ENCODE measurements at regions of chr6 and their contacts with region 1.

Region 1: GRCh38 chr6:27608916-27609883 is 136.3 kb upstream of the ZNF184 start:
- DNase-seq: peak; percentile 91
- ATAC-seq: no peak
- H3K4me3 ChIP-seq: no peak overlapping the region
- H3K27ac ChIP-seq: no peak overlapping the region
- H3K4me1 ChIP-seq: no peaks in the 10 kb centered on the region
- H3K27me3 ChIP-seq: no peaks in the 10 kb centered on the region
- CTCF ChIP-seq: peak; percentile 96

Region 2: DNA sequence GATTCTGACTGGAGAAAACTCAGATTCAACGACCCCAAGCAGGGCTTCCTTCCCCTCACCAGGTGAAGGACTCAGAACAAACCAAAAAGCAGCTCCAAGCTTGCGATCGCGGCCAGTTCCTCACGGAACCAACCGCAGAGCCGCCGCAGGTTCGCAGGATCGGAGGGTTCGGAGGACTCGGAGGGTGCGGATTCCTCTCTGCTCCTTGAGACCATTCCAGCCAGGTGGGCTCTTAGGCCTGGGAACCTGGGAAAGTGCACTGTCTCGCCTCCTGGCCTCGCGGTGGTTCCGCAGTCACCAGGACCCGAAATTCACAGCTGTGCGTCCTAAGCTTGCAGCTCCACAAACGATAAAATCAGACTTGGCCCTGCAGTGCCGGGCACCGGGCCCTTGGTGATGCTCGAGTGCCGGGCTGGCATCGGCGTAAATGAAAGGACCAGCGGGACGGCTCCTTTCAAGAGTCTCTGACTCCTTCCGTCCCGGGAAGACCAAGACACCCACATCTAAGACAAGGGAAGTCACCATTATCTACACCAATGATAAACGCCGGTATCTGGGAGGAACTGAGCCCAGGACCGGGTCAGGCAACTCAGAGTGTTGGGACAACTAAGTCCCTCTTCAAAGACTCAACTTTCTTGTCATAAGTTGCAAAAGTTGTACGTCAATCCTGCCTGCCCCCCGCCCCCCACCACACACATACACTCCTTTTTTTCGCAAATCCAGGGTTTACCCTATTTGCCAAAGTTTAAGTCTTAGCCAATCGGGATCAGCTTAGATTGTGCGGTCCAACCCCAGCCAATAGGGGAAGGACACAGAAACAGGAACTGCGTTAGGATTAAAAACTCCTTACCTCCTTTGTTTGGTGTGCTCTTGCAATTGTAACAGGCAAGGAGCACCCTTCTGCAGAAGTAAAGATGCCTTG is 431.5 kb before region 1 on chr6:
- CTCF ChIA-PET with region 1: interaction called, 14 read pairs
- POLR2A ChIA-PET with region 1: no interaction called
- in situ Hi-C with region 1: no loop called
- intact Hi-C with region 1: loop called (anchors 10 kb)
- DNase-seq: peak; percentile 78
- ATAC-seq: peak; percentile 89
- H3K4me3 ChIP-seq: peak overlapping the region; percentile 92 to 100
- H3K27ac ChIP-seq: peak overlapping the region; percentile 87
- H3K4me1 ChIP-seq: no peaks in the 10 kb centered on the region
- H3K27me3 ChIP-seq: no peaks in the 10 kb centered on the region
- CTCF ChIP-seq: peak; percentile 81

Region 3: GRCh38 chr6:27303613-27304272 is 305.5 kb before region 1 on chr6:
- CTCF ChIA-PET with region 1: no interaction called
- POLR2A ChIA-PET with region 1: no interaction called
- in situ Hi-C with region 1: no loop called
- intact Hi-C with region 1: loop called (anchors 10 kb)
- DNase-seq: no peak
- ATAC-seq: peak; percentile 95
- H3K4me3 ChIP-seq: peak overlapping the region; percentile 7 to 14
- H3K27ac ChIP-seq: no peak overlapping the region
- H3K4me1 ChIP-seq: no peaks in the 10 kb centered on the region; the same call in 1 of the 2 replicates
- H3K27me3 ChIP-seq: no peaks in the 10 kb centered on the region; the same call in 1 of the 2 replicates
- CTCF ChIP-seq: no peak

Region 4: DNA sequence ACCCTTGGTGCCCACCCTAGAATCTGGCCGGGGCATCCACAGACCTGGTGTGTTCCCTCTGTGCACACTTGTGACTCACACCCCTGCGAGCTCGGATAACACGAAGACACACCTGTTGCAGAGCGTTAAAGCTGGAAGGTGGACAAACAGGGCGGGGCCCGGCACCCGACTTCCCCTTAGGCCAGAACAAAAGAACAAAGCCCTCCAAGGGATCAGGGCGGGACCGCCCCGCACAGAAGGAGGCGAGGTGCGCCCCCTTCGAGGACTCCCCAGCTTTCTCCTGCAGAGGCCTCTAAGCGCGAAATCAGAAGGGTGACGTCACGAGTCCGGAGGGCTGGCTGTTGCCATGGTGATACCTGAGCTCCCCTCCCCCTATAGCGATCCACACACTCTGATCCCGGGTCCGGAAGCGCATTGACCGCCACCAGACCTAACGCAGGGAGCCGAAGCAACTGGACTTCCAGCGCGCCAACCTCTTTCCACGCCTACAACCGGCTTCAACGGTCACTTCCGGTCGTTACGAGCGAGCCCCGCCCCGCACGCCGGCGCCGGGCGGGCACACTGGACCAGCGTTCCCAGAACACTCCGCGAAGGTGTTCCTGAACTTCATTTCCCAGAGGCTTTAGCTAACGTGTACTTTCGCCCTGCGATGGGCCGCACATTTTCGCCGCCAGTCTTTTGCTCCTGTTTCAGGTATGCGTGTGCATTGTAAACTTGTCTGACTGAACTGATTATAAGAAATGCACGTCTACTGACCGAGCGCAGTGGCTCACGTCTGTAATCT is 136.4 kb before region 1 on chr6 and contains the start of gene ZNF184:
- CTCF ChIA-PET with region 1: no interaction called
- POLR2A ChIA-PET with region 1: interaction called, 12 read pairs
- in situ Hi-C with region 1: no loop called
- intact Hi-C with region 1: no loop called
- DNase-seq: peak; percentile 95
- ATAC-seq: peak; percentile 98
- H3K4me3 ChIP-seq: peak within 1 kb of the TSS; percentile 91 to 92
- H3K27ac ChIP-seq: peak within 1 kb of the TSS; percentile 93
- H3K4me1 ChIP-seq: peaks cover 7% of the 10 kb centered on the region
- H3K27me3 ChIP-seq: no peaks in the 10 kb centered on the region
- CTCF ChIP-seq: no peak; the same call in 1 of the 2 replicates
- total RNA-seq, gene ZNF184: 7.8 TPM

Region 5: GRCh38 chr6:27518881-27519795 is 90.1 kb before region 1 on chr6:
- CTCF ChIA-PET with region 1: interaction called, 5 read pairs
- POLR2A ChIA-PET with region 1: no interaction called
- in situ Hi-C with region 1: no loop called
- intact Hi-C with region 1: loop called (anchors 5 kb)
- DNase-seq: peak; percentile 96
- ATAC-seq: peak; percentile 93
- H3K4me3 ChIP-seq: peak overlapping the region; percentile 93 to 95
- H3K27ac ChIP-seq: peak overlapping the region; percentile 82
- H3K4me1 ChIP-seq: peaks cover 10% of the 10 kb centered on the region
- H3K27me3 ChIP-seq: peaks cover 11% of the 10 kb centered on the region; the same call in 1 of the 2 replicates
- CTCF ChIP-seq: peak; percentile 85

Region 6: DNA sequence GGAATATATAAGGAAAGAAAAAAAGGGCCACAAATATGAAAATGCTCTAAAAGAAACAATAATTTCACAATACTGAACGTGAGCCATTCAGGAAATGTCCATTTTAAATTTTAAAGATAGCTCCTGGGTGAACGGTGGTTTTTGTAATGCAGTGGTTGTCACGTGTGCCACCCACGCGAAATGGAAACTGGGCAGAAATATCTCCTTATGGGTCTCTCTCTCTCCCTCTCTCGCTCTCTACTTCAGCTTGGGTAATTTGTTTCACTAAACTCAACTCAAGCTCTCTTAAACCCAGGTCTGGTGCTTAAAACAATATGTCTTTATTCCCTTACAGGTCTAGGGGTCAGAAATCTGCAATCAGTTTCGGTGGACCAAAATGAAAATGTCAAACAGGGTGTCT is 152.2 kb after region 1 on chr6:
- CTCF ChIA-PET with region 1: no interaction called
- POLR2A ChIA-PET with region 1: no interaction called
- in situ Hi-C with region 1: no loop called
- intact Hi-C with region 1: no loop called
- DNase-seq: no peak
- ATAC-seq: no peak
- H3K4me3 ChIP-seq: no peak overlapping the region
- H3K27ac ChIP-seq: no peak overlapping the region
- H3K4me1 ChIP-seq: no peaks in the 10 kb centered on the region
- H3K27me3 ChIP-seq: no peaks in the 10 kb centered on the region
- CTCF ChIP-seq: no peak

Region 7: DNA sequence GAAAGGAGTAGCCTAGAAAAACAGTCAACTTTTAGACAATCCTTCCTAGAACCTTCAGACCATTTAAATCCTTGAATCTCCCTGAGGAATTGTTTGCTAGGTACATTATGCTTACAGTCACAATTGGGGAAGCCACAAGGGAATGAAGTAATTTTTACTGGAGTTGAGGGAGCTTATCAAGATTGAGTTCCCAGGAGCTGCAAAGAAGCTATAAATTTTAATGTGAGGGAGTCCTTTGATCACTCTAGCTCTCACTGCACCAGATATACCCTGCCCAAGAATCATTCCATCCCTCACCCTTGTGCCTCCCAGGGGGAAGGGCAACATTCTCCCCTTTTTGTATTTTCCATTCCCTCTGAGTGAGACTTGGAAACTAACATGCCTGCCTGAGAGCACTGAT is 458.9 kb after region 1 on chr6:
- CTCF ChIA-PET with region 1: no interaction called
- POLR2A ChIA-PET with region 1: no interaction called
- in situ Hi-C with region 1: no loop called
- intact Hi-C with region 1: no loop called
- DNase-seq: no peak
- ATAC-seq: no peak
- H3K4me3 ChIP-seq: no peak overlapping the region
- H3K27ac ChIP-seq: no peak overlapping the region
- H3K4me1 ChIP-seq: no peaks in the 10 kb centered on the region
- H3K27me3 ChIP-seq: peaks cover 43% of the 10 kb centered on the region
- CTCF ChIP-seq: no peak